Activated CD4-positive, alpha-beta T cell treated with anti-CD3 and anti-CD28 coated beads, Interleukin-2, amount 10 ng/mL, durations not matched to agents 24 days and 14 days (primary cell): ENCODE measurements at regions of chr17 and their contacts with region 1.

Region 1: DNA sequence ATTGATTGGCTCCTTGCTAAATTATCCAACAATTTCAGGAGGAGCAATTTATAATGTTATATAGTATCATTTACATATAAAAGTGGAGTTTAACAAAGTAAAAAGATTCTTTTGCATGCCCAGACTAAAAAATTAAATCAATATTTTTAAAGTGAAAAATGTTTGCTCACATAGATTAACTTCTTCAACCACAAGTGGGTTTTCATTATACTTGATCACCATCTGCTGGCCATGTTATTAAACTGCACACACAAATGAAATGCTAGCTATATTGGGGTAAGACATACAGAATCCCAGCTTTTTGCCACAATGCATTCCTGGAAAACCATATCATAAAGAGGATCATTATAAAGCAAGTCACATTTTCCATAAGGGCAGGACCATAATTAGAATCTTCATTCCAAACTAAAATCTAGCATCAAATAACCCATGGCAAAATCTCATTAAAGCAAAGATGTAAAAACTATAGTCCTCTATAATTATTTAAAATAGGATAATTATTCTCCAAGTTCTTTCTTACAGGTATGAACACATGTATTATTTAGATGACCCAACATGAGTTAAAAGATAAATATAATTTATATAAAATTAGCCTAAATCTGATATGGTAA is 26.3 kb downstream of the CEP112 start:
- DNase-seq: peak; percentile 77
- H3K4me3 Mint-ChIP-seq: no peak overlapping the region
- H3K27ac Mint-ChIP-seq: no peak overlapping the region
- H3K4me1 Mint-ChIP-seq: no peaks in the 10 kb centered on the region
- H3K27me3 Mint-ChIP-seq: peaks cover 2% of the 10 kb centered on the region

Region 2: DNA sequence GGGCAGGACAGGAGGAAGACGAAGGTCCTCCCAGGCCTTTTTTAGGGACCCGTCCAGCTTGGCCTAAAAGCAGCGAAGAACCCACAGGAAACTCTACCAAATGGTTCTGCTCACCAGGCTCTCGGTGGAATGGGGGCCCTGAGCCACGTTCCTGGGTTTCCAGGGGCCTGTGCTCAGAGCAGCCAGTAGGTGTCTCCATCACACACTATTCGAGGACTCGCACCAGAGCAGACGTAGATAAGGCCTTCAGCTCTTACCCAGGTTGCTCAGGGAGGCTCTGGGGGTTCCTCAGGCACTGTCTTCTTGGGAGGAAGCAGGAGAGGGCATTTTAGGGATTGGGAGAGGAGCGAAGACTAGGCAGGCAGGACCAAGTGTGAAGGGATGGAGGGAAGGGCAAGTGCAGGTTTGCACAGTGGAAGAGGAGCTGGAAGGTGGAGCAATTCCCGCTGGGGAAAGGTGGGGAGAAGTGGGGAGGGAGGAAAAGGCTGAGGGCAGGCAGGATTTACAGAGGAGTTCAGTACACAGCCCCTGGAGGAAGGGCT is 871.4 kb before region 1 on chr17:
- intact Hi-C with region 1: loop called (anchors 1 kb)
- DNase-seq: peak; percentile 85
- H3K4me3 Mint-ChIP-seq: no peak overlapping the region
- H3K27ac Mint-ChIP-seq: no peak overlapping the region
- H3K4me1 Mint-ChIP-seq: no peaks in the 10 kb centered on the region
- H3K27me3 Mint-ChIP-seq: peaks cover 6% of the 10 kb centered on the region